OCI-LY7 (cell line): ENCODE measurements at regions of chr1 and their contacts with region 1.

Region 1: GRCh38 chr1:10694633-10695627 is 101.5 kb downstream of the CASZ1 start:
- DNase-seq: peak; percentile 77
- H3K4me3 ChIP-seq: peak overlapping the region; percentile 51
- H3K27ac ChIP-seq: no peak overlapping the region
- H3K4me1 ChIP-seq: peaks cover 9% of the 10 kb centered on the region
- CTCF ChIP-seq: no peak

Region 2: DNA sequence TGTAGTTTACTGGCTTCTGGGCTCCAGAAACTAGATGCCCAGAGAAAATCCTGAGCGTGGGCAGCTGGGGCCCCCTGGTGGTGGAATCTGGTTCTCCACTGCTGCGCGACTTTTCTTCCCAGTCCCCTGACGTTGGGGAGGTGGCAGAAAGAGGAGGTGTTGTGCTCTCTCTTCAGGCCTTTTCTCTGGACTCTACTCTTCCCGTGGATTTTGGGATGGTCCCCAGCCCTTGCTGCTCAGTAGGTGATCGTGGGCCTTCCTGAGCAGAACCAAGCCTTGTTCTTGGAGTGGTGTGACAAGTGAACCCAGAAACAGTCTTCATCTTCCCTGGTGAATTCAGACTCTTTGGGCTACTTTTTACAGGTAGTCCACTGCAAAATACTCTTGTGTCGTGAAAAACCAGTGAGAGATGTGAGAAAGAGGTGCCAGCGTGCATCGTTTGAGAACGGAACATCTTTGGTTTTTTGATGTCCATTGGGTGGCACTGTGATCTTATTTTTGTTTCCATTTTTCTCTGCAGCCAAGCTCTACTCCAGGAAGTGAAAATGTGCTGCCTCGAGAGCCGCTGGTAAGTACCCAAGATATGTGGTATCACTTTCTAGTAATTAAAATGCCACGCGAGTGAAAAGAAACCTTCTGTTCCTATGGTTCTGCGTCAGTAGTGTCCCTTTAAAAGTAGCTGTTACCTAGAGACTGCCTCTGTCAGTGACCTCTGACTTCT is 200.0 kb before region 1 on chr1:
- CTCF ChIA-PET with region 1: no interaction called
- POLR2A ChIA-PET with region 1: no interaction called
- intact Hi-C with region 1: loop called (anchors 5 kb)
- DNase-seq: peak; percentile 77
- H3K4me3 ChIP-seq: peak overlapping the region; percentile 46
- H3K27ac ChIP-seq: peak overlapping the region; percentile 34
- H3K4me1 ChIP-seq: peaks cover 13% of the 10 kb centered on the region
- CTCF ChIP-seq: peak; percentile 97

Region 3: DNA sequence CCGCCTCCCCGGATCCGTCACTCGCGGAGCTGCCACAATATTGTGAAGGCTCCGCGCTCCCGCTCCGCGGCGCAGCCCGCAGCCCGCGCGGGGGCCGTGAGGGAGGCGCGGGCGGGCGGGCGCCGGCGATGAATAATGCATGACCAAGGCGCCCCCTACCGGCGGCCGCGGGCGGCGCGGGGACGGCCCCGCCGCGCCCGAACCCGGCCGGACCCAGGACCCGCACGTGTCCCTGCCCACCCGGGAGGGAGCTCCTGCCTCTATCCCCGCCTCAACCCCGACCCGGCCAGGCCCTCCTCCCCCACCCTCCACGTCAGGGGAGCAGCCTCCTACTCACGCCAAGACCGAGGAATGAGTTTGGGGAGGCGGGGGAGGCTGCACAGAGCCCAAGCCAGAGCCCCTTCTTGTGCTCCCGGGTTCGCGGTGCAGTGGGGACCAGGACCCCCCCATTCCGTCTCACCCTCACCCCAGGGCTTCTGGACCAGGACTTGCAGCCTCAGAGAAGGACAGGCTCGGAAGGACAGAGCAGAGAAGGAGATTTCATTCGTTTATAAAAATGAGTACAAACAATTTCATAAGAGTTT is 172.3 kb after region 1 on chr1:
- CTCF ChIA-PET with region 1: no interaction called
- POLR2A ChIA-PET with region 1: no interaction called
- intact Hi-C with region 1: loop called (anchors 2 kb)
- DNase-seq: peak; percentile 51
- H3K4me3 ChIP-seq: peak overlapping the region; percentile 25
- H3K27ac ChIP-seq: no peak overlapping the region
- H3K4me1 ChIP-seq: peaks cover 3% of the 10 kb centered on the region
- CTCF ChIP-seq: peak; percentile 71

Region 4: DNA sequence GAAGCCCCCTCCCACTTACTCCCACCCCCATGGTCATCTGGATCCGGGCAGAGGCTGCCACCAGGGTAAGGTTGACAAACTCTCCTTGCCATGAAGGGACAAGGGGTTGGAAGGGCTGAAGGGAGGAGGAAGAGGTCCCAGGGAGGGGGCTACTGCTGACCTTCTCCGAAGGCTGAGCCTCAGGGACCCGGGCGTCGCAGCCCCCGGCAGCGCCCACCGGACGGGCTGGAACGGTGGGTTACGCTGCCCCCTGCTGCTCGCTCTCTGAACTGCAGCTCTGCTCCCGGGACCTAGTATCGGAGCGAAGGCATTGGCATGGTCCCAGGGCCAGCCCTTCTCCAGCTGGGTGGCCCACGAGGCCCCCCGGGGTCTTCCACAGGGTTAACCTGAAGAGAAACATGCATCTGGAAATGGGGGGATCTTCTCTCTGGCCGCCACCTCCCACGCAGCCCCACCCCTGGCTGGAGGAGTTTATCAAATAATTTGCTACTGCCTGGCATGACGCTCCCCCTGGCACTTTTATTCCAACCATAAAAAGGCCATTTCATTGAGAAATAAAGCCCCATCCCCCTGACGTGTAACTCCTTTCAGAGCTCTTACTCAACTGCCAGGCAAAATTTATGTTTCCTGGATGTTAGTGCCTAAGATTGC is 247.1 kb after region 1 on chr1:
- CTCF ChIA-PET with region 1: no interaction called
- POLR2A ChIA-PET with region 1: no interaction called
- intact Hi-C with region 1: loop called (anchors 1 kb)
- DNase-seq: peak; percentile 52
- H3K4me3 ChIP-seq: no peak overlapping the region
- H3K27ac ChIP-seq: no peak overlapping the region
- H3K4me1 ChIP-seq: peaks cover 47% of the 10 kb centered on the region
- CTCF ChIP-seq: peak; percentile 93

Region 5: DNA sequence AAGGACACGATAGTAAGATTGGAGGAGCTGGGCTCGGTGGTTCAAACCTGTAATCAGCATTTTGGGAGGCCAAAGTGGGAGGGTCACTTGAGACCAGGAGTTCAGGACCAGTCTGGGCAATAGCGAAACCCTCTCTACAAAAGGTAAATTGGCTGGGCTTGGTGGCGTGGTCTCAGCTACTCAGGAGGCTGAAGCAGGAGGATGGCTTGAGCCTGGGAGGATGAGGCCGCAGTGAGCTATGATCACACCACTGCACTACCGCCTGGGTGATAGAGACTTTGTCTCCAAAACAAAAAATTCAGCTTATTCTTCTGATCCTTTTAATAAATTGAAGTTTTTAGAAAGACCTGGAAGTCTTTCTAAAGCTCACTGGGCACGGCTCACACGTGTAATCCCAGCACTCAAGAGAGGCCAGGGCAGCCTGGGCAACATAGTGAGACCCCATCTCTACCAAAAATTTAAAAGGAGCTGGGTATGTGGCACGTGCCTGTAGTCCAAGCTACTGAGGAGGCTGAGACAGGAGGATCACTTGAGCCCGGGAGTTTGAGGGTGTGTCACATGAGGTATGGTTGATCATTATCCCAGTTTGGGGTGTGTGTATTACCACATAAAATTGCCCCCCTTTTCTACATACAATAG is 336.8 kb after region 1 on chr1:
- CTCF ChIA-PET with region 1: no interaction called
- POLR2A ChIA-PET with region 1: no interaction called
- intact Hi-C with region 1: no loop called
- DNase-seq: no peak
- H3K4me3 ChIP-seq: no peak overlapping the region
- H3K27ac ChIP-seq: no peak overlapping the region
- H3K4me1 ChIP-seq: no peaks in the 10 kb centered on the region
- CTCF ChIP-seq: no peak